ENCODE measurements at regions of chr13 and their contacts with region 1.

Region 1: DNA sequence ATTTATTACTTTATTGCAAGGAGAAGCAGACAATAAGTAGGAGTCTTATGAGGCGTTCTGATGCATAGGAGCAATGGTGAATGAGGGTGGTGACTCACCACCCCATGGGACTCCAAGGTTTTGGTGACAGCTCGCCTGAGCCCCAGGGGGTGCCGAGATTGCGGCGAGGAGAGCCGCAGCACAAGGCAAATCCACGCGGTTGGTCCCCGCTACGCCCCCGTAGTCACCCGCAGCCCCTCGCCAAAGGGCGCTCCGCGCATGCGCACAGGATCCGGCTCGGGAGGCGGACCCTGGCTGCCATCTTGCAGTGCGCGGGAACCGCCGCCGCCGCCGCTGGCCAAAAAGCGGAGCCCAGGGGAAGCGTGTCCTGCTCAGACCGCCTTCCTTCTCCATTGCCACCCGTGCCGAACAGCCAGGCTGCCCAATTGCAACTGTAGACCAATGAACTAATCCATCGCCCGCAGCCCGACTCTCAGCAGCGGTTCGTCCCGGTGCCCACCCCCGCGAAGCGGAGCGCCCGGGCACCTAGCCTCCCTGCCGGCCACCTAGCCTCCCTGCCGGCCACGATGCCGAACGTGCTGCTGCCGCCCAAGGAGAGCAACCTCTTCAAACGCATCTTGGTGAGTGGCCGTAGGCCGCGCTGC is at the start of gene NAA16:
- DNase-seq: peak; percentile 96
- ATAC-seq: peak; percentile 83
- H3K4me3 Mint-ChIP-seq: peak within 1 kb of the TSS; percentile 94
- H3K27ac Mint-ChIP-seq: peak within 1 kb of the TSS; percentile 95
- H3K4me1 Mint-ChIP-seq: peaks cover 27% of the 10 kb centered on the region
- H3K27me3 Mint-ChIP-seq: no peaks in the 10 kb centered on the region
- CTCF ChIP-seq: no peak
- total RNA-seq, gene NAA16: 23.5 to 32.8 TPM

Region 2: DNA sequence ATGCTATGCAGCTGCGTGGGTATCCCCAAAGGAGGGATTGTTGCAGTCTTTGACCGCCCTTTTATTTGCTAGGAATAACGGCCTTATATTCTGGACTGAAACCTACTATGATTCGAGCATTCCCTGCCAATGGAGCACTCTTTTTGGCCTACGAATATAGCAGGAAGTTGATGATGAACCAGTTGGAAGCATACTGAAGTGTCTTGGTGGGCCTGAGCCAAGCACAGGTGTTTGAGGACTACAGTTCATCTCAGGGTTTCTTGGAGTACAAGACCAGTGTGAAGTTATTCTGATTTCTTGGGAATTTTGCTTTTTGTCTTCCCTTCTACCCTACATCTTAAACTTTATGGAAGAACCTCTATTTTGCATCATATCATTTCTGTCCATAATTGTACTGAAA is 501.6 kb before region 1 on chr13:
- CTCF ChIA-PET with region 1: no interaction called
- POLR2A ChIA-PET with region 1: no interaction called
- intact Hi-C with region 1: no loop called
- DNase-seq: no peak
- ATAC-seq: no peak
- H3K4me3 Mint-ChIP-seq: no peak overlapping the region
- H3K27ac Mint-ChIP-seq: no peak overlapping the region
- H3K4me1 Mint-ChIP-seq: no peaks in the 10 kb centered on the region
- H3K27me3 Mint-ChIP-seq: no peaks in the 10 kb centered on the region
- CTCF ChIP-seq: no peak

Region 3: DNA sequence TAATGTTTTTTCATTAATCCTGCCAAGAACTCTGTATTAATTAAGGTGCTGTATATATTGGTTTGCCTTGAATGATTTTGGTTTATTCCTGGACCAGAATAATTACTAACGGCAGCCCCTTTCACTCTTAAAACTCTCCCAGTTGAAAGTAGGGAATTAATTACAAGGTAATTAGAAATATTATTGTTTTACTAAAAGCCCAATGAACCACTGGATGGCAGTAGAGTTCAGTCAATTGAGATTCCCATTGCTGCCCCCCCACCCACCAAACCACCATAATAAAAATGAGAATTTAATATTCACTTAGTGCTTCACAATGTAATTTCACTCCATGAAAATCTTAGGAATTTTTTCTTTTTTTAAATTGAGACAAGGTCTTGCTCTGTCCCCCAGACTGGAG is 236.1 kb before region 1 on chr13:
- CTCF ChIA-PET with region 1: no interaction called
- POLR2A ChIA-PET with region 1: no interaction called
- intact Hi-C with region 1: loop called (anchors 10 kb)
- DNase-seq: peak; percentile 40
- ATAC-seq: peak; percentile 45
- H3K4me3 Mint-ChIP-seq: no peak overlapping the region
- H3K27ac Mint-ChIP-seq: no peak overlapping the region
- H3K4me1 Mint-ChIP-seq: no peaks in the 10 kb centered on the region
- H3K27me3 Mint-ChIP-seq: no peaks in the 10 kb centered on the region
- CTCF ChIP-seq: peak; percentile 54

Region 4: GRCh38 chr13:41263261-41264027 is 47.6 kb before region 1 on chr13 and contains the start of gene MTRF1:
- CTCF ChIA-PET with region 1: interaction called, 3 read pairs
- POLR2A ChIA-PET with region 1: interaction called, 4 read pairs
- intact Hi-C with region 1: loop called (anchors 2 kb)
- DNase-seq: peak; percentile 86
- ATAC-seq: peak; percentile 93
- H3K4me3 Mint-ChIP-seq: peak within 1 kb of the TSS; percentile 92
- H3K27ac Mint-ChIP-seq: peak within 1 kb of the TSS; percentile 100
- H3K4me1 Mint-ChIP-seq: peaks cover 30% of the 10 kb centered on the region
- H3K27me3 Mint-ChIP-seq: no peaks in the 10 kb centered on the region
- CTCF ChIP-seq: no peak
- total RNA-seq, gene MTRF1: 22.6 to 23.4 TPM

Region 5: GRCh38 chr13:41271456-41272285 is 39.4 kb before region 1 on chr13:
- CTCF ChIA-PET with region 1: no interaction called
- POLR2A ChIA-PET with region 1: interaction called, 4 read pairs
- intact Hi-C with region 1: loop called (anchors 2 kb)
- DNase-seq: no peak
- ATAC-seq: peak; percentile 78
- H3K4me3 Mint-ChIP-seq: peak overlapping the region; percentile 38
- H3K27ac Mint-ChIP-seq: peak overlapping the region; percentile 93
- H3K4me1 Mint-ChIP-seq: peaks cover 25% of the 10 kb centered on the region
- H3K27me3 Mint-ChIP-seq: no peaks in the 10 kb centered on the region
- CTCF ChIP-seq: no peak